ENCODE measurements at regions of chr5 and their contacts with region 1.

Region 1: GRCh38 chr5:94992098-94992724 is 292.7 kb downstream of the MCTP1 start:
- DNase-seq: no peak
- H3K4me3 ChIP-seq: no peak overlapping the region
- H3K27ac ChIP-seq: no peak overlapping the region
- H3K4me1 ChIP-seq: no peaks in the 10 kb centered on the region
- H3K27me3 ChIP-seq: no peaks in the 10 kb centered on the region
- CTCF ChIP-seq: no peak
- EP300 ChIP-seq: no peak
- POLR2A ChIP-seq: no peak

Region 2: DNA sequence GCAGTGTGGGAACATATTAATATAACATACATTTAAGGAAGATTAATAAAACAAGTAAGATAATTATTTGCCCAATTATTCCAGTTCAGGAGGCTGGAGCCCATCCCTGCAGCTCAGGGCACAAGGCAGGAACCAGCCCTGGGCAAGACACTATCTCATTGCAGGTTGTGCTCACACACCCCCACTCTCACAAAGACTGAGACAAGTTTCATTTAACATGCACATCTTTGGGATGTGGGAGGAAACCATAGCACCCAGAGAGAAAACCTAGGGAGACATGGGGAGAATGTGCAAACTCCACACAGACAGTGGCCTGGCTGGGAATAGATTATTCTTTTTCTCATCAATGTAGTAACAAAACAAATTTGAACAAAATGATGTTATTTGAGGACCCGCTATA is 13.6 kb after region 1 on chr5:
- intact Hi-C with region 1: loop called (anchors 1 kb)
- DNase-seq: no peak
- H3K4me3 ChIP-seq: no peak overlapping the region
- H3K27ac ChIP-seq: no peak overlapping the region
- H3K4me1 ChIP-seq: no peaks in the 10 kb centered on the region
- H3K27me3 ChIP-seq: no peaks in the 10 kb centered on the region
- CTCF ChIP-seq: no peak
- EP300 ChIP-seq: no peak
- POLR2A ChIP-seq: no peak